ENCODE measurements at regions of chr14 and their contacts with region 1.

Region 1: GRCh38 chr14:22519877-22520685 is 68.9 kb downstream of the DAD1 start:
- DNase-seq: no peak
- H3K4me3 Mint-ChIP-seq: peak overlapping the region; percentile 91
- H3K27ac Mint-ChIP-seq: peak overlapping the region; percentile 98
- H3K4me1 Mint-ChIP-seq: peaks cover 86% of the 10 kb centered on the region
- H3K27me3 Mint-ChIP-seq: no peaks in the 10 kb centered on the region

Region 2: GRCh38 chr14:22163051-22163450 is 357.0 kb before region 1 on chr14:
- CTCF ChIA-PET with region 1: no interaction called
- intact Hi-C with region 1: loop called (anchors 10 kb)
- DNase-seq: no peak
- H3K4me3 Mint-ChIP-seq: peak overlapping the region; percentile 73
- H3K27ac Mint-ChIP-seq: peak overlapping the region; percentile 82
- H3K4me1 Mint-ChIP-seq: peaks cover 15% of the 10 kb centered on the region
- H3K27me3 Mint-ChIP-seq: no peaks in the 10 kb centered on the region

Region 3: GRCh38 chr14:23186913-23187654 is 667.0 kb after region 1 on chr14:
- CTCF ChIA-PET with region 1: no interaction called
- intact Hi-C with region 1: no loop called
- DNase-seq: peak; percentile 55
- H3K4me3 Mint-ChIP-seq: no peak overlapping the region
- H3K27ac Mint-ChIP-seq: no peak overlapping the region
- H3K4me1 Mint-ChIP-seq: no peaks in the 10 kb centered on the region
- H3K27me3 Mint-ChIP-seq: no peaks in the 10 kb centered on the region

Measured in activated naive CD4-positive, alpha-beta T cell treated with anti-CD3 and anti-CD28 coated beads for 36 hours (primary cell).